ENCODE measurements at regions of chr10 and their contacts with region 1.

Region 1: GRCh38 chr10:43348511-43349312 is 22.7 kb upstream of the FXYD4 start:
- DNase-seq: peak; percentile 89
- H3K4me3 ChIP-seq: no peak overlapping the region
- H3K27ac ChIP-seq: no peak overlapping the region
- H3K4me1 ChIP-seq: peaks cover 0 to 9% (median 2%) of the 10 kb centered on the region in 4 donors
- H3K27me3 ChIP-seq: peaks cover 0 to 17% (median 8%) of the 10 kb centered on the region in 3 donors
- CTCF ChIP-seq: peak; percentile 50 to 80 (median 76)
- EP300 ChIP-seq: no peak
- POLR2A ChIP-seq: no peak

Region 2: GRCh38 chr10:43292755-43293676 is 55.7 kb before region 1 on chr10:
- intact Hi-C with region 1: loop called (anchors 1 kb)
- DNase-seq: peak; percentile 70
- H3K4me3 ChIP-seq: no peak overlapping the region
- H3K27ac ChIP-seq: no peak overlapping the region
- H3K4me1 ChIP-seq: peaks cover 0 to 4% (median 0%) of the 10 kb centered on the region in 4 donors
- H3K27me3 ChIP-seq: peaks cover 0 to 17% (median 0%) of the 10 kb centered on the region in 3 donors
- CTCF ChIP-seq: peak; percentile 30 to 73 (median 62)
- EP300 ChIP-seq: no peak
- POLR2A ChIP-seq: no peak

Region 3: GRCh38 chr10:43461950-43462349 is 113.2 kb after region 1 on chr10:
- intact Hi-C with region 1: loop called (anchors 5 kb)
- DNase-seq: no peak
- H3K4me3 ChIP-seq: no peak overlapping the region
- H3K27ac ChIP-seq: no peak overlapping the region
- H3K4me1 ChIP-seq: peaks cover 0 to 5% (median 0%) of the 10 kb centered on the region in 4 donors
- H3K27me3 ChIP-seq: no peaks in the 10 kb centered on the region
- CTCF ChIP-seq: peak; percentile 43 to 63 (median 56)
- EP300 ChIP-seq: no peak
- POLR2A ChIP-seq: no peak

Region 4: GRCh38 chr10:43471935-43472720 is 123.4 kb after region 1 on chr10:
- intact Hi-C with region 1: no loop called
- DNase-seq: no peak
- H3K4me3 ChIP-seq: no peak overlapping the region
- H3K27ac ChIP-seq: no peak overlapping the region
- H3K4me1 ChIP-seq: no peaks in the 10 kb centered on the region
- H3K27me3 ChIP-seq: no peaks in the 10 kb centered on the region
- CTCF ChIP-seq: no peak
- EP300 ChIP-seq: no peak
- POLR2A ChIP-seq: no peak